Lower leg skin (tissue), 4 donors: ENCODE measurements at regions of chr10 and their contacts with region 1.

Region 1: GRCh38 chr10:100338434-100339036 is 8.5 kb upstream of the SCD start:
- DNase-seq: peak; percentile 60 to 95
- H3K4me3 ChIP-seq: no peak overlapping the region
- CTCF ChIP-seq: peak in 2 of 3 donors; percentile 25 to 44
- POLR2A ChIP-seq: no peak

Region 2: GRCh38 chr10:100433253-100434240 is 95.0 kb after region 1 on chr10:
- intact Hi-C with region 1: loop called (anchors 1 kb)
- DNase-seq: peak; percentile 95 to 99
- H3K4me3 ChIP-seq: no peak overlapping the region
- CTCF ChIP-seq: peak in 2 of 3 donors; percentile 3 to 99
- POLR2A ChIP-seq: no peak

Region 3: GRCh38 chr10:100446130-100446761 is 107.7 kb after region 1 on chr10:
- intact Hi-C with region 1: loop called (anchors 5 kb)
- DNase-seq: no peak
- H3K4me3 ChIP-seq: no peak overlapping the region
- CTCF ChIP-seq: no peak
- POLR2A ChIP-seq: no peak